Activated naive CD4-positive, alpha-beta T cell treated with anti-CD3 and anti-CD28 coated beads for 36 hours (primary cell): ENCODE measurements at regions of chr6 and their contacts with region 1.

Region 1: DNA sequence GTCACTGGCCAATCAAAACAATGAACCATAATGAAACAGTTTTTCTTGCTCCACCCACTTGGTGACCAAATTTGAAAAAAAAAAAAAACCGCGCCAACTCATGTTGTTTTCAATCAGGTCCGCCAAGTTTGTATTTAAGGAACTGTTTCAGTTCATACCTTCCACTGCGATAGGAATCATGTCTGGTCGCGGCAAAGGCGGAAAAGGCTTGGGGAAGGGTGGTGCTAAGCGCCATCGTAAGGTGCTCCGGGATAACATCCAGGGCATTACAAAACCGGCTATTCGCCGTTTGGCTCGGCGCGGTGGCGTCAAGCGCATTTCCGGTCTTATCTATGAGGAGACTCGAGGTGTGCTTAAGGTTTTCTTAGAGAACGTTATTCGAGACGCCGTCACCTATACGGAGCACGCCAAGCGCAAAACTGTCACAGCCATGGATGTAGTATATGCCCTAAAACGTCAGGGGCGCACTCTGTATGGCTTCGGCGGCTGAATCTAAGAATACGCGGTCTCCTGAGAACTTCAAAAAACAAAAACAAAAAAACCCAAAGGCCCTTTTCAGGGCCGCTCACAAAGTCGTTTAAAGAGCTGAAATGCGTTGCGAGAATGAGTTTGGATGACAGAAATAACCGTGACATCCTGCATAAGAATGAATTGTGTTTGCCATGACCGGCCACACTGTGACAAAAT is 16.7 kb downstream of the HFE start:
- DNase-seq: peak; percentile 87
- H3K4me3 Mint-ChIP-seq: peak overlapping the region; percentile 80
- H3K27ac Mint-ChIP-seq: peak overlapping the region; percentile 94
- H3K4me1 Mint-ChIP-seq: peaks cover 18% of the 10 kb centered on the region
- H3K27me3 Mint-ChIP-seq: peaks cover 2% of the 10 kb centered on the region

Region 2: GRCh38 chr6:26045065-26045927 is 58.6 kb before region 1 on chr6:
- CTCF ChIA-PET with region 1: no interaction called
- intact Hi-C with region 1: loop called (anchors 1 kb)
- DNase-seq: peak; percentile 84
- H3K4me3 Mint-ChIP-seq: peak overlapping the region; percentile 83
- H3K27ac Mint-ChIP-seq: peak overlapping the region; percentile 99
- H3K4me1 Mint-ChIP-seq: peaks cover 13% of the 10 kb centered on the region
- H3K27me3 Mint-ChIP-seq: no peaks in the 10 kb centered on the region

Region 3: GRCh38 chr6:26054857-26055669 is 48.9 kb before region 1 on chr6:
- CTCF ChIA-PET with region 1: interaction called, 570 read pairs
- intact Hi-C with region 1: loop called (anchors 2 kb)
- DNase-seq: peak; percentile 95
- H3K4me3 Mint-ChIP-seq: peak overlapping the region; percentile 97
- H3K27ac Mint-ChIP-seq: peak overlapping the region; percentile 100
- H3K4me1 Mint-ChIP-seq: peaks cover 18% of the 10 kb centered on the region
- H3K27me3 Mint-ChIP-seq: peaks cover 11% of the 10 kb centered on the region

Region 4: GRCh38 chr6:26116267-26116666 is 12.4 kb after region 1 on chr6:
- CTCF ChIA-PET with region 1: interaction called, 4 read pairs
- intact Hi-C with region 1: loop called (anchors 1 kb)
- DNase-seq: no peak
- H3K4me3 Mint-ChIP-seq: no peak overlapping the region
- H3K27ac Mint-ChIP-seq: no peak overlapping the region
- H3K4me1 Mint-ChIP-seq: peaks cover 15% of the 10 kb centered on the region
- H3K27me3 Mint-ChIP-seq: no peaks in the 10 kb centered on the region